PC-9 (cell line): ENCODE measurements at regions of chr19 and their contacts with region 1.

Region 1: DNA sequence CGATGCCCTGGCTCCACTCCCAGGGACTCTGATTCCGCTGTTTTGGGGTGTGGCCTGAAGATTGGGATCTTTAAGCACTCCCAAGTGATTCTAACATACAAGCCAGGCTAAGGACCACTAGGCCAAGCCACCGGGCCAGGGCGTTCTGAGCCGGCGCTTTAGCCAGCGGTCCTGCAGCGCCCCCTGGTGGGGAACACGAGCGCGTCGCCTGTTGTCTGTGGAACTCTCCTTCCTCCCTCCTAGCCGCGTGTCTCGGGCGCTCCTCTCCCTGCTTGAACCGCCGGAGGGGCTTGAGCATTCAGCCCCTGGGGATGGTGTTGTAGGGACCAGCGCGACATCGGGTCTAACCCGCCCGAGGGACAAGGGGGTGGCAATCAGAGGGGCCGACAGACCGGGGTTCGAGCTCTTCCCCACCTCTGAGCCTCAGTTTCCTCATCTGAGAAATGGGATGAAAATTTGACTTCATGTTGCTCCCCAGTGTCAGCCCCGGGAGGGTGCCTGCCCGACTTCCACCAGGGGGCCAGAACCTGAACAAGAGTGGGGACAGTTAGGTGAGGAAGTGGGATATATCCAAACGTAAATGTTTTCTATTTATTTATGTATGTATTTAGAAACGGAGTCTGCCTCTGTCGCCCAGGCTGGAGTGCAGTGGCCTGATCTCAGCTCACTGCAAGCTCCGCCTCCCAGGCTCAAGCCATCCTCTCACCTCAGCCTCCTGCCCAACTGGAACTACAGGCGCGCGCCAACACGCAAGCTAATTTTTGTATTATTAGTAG is 18.0 kb upstream of the PNMA8B start:
- DNase-seq: peak; percentile 51 to 76
- H3K4me3 ChIP-seq: no peak overlapping the region
- H3K27ac ChIP-seq: no peak overlapping the region
- H3K4me1 ChIP-seq: no peaks in the 10 kb centered on the region; the same call in 1 of the 2 replicates
- H3K27me3 ChIP-seq: peaks cover 6% of the 10 kb centered on the region; the same call in 1 of the 2 replicates
- CTCF ChIP-seq: peak; percentile 98

Region 2: DNA sequence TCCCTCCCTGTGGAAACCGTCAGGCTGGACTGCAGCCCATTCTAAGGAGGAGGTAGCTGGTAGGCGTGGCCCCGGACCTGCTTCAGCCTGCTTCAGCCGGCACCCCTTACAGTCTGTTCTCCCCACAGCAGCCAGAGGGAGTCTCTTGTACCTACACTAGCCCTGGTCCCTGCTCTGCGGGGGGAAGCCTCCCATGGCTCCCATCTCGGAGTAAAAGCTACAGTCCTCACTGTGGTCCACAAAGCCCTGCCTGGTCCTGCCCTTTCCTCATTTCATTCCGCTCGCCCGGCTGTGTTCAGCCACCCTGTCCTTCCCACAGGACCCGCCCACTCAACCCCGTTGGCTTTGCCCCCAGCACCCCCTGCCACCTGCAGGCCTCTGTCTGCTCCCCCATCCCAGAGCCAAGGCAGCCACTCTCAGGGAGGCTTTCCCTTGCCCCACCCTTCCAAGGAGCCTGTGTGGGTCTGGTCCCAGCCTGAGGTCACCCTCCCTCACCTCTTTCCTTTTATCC is 492.1 kb before region 1 on chr19:
- CTCF ChIA-PET with region 1: no interaction called
- POLR2A ChIA-PET with region 1: no interaction called
- intact Hi-C with region 1: loop called (anchors 5 kb)
- DNase-seq: no peak
- H3K4me3 ChIP-seq: no peak overlapping the region
- H3K27ac ChIP-seq: no peak overlapping the region
- H3K4me1 ChIP-seq: no peaks in the 10 kb centered on the region
- H3K27me3 ChIP-seq: no peaks in the 10 kb centered on the region
- CTCF ChIP-seq: no peak

Region 3: DNA sequence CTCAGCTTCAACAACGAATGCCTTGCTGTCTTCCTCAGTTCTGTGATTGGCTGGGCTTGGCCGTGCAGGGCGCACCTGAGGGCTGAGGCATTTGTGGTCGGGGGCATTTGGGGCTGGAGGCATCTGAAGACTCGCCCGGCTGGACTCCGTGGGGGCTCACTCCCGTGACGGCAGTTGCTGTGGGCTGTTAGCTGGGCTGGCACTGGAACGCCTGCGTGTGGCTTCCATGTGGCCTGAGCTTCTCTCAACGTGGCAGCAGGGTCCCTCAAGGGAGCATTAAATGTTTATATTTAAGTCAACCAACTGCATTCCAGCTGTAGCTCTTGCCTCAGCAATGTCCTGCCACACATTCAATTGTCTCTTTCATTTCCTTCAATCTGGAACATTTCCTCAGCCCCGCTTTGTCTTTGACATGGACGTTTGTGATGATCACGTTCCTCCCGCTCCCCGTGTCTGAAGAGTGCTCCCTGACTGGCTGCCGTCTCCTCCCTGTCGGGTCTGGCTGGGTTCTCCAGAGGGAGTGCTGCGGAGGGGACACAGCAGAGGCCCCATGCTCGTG is 121.3 kb before region 1 on chr19:
- CTCF ChIA-PET with region 1: interaction called, 4 read pairs
- POLR2A ChIA-PET with region 1: no interaction called
- intact Hi-C with region 1: loop called (anchors 1 kb)
- DNase-seq: no peak
- H3K4me3 ChIP-seq: no peak overlapping the region
- H3K27ac ChIP-seq: no peak overlapping the region
- H3K4me1 ChIP-seq: no peaks in the 10 kb centered on the region
- H3K27me3 ChIP-seq: no peaks in the 10 kb centered on the region
- CTCF ChIP-seq: no peak

Region 4: GRCh38 chr19:46404055-46404752 is 109.4 kb before region 1 on chr19:
- CTCF ChIA-PET with region 1: no interaction called
- POLR2A ChIA-PET with region 1: no interaction called
- intact Hi-C with region 1: loop called (anchors 2 kb)
- DNase-seq: no peak
- H3K4me3 ChIP-seq: no peak overlapping the region
- H3K27ac ChIP-seq: no peak overlapping the region
- H3K4me1 ChIP-seq: no peaks in the 10 kb centered on the region
- H3K27me3 ChIP-seq: peaks cover 47% of the 10 kb centered on the region
- CTCF ChIP-seq: no peak

Region 5: GRCh38 chr19:46746281-46747013 is 232.8 kb after region 1 on chr19 and contains the start of gene STRN4:
- CTCF ChIA-PET with region 1: no interaction called
- POLR2A ChIA-PET with region 1: no interaction called
- intact Hi-C with region 1: no loop called
- DNase-seq: peak in 1 of 2 experiments; percentile 39
- H3K4me3 ChIP-seq: peak within 1 kb of the TSS; percentile 88
- H3K27ac ChIP-seq: no peak within 1 kb of the TSS
- H3K4me1 ChIP-seq: peaks cover 11% of the 10 kb centered on the region
- H3K27me3 ChIP-seq: no peaks in the 10 kb centered on the region
- CTCF ChIP-seq: no peak
- total RNA-seq, gene STRN4: 93.3 and 131 TPM in 2 replicates